Activated CD8-positive, alpha-beta memory T cell treated with anti-CD3 and anti-CD28 coated beads, Interleukin-2, amount 10 ng/mL, durations not matched to agents 7 days and 5 days (primary cell): ENCODE measurements at regions of chr5 and their contacts with region 1.

Region 1: GRCh38 chr5:181184857-181185251 is 20.1 kb downstream of the TRIM7 start:
- DNase-seq: no peak
- ATAC-seq: no peak
- H3K4me3 Mint-ChIP-seq: peak overlapping the region; percentile 81
- H3K27ac Mint-ChIP-seq: peak overlapping the region; percentile 98
- H3K4me1 Mint-ChIP-seq: peaks cover 44% of the 10 kb centered on the region
- H3K27me3 Mint-ChIP-seq: peaks cover 12% of the 10 kb centered on the region

Region 2: DNA sequence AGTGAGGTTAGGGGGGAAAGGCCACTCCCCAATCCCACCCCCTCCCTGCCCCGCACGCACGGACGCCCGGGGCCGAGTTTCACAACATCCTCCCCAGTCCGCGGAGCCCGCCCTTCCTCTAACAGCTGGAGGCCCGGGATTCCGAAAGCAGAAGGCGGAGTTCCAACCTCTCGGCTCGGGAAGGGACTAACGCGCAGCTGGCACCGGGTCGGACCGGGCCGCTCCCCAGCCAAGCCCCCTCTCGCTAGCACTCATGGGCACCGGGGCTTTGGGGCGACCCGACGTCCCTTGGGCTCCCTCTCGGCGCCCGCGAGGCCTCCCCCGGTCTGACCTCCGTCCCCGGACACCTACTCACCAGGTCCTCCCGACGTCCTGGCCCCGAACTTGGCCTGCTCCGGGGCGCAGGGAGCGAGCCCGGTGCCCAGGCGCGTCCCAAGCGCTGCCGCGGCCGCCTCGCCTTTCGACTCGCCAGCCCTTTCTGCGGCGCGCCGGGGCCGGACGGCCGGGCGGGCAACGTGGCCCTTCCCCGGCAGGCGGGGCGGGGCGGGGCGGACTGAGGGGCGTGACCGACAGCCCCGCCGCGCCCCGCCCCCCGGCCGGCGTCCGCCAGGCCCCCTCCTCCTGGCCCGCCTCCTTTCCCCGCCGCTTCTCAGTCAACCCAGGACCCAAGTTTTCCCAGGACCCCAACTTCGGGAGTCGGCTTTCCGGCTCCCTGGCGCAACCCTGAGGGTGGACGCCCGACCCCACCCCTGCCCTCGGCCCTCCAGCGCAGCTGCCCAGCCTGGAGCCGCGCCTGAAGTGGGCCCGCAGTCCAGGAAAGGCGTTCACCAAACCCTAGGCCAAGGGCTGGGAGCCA is 382.3 kb before region 1 on chr5 and contains the start of gene MGAT1:
- CTCF ChIA-PET with region 1: no interaction called
- DNase-seq: peak; percentile 82
- ATAC-seq: peak; percentile 60
- H3K4me3 Mint-ChIP-seq: peak within 1 kb of the TSS; percentile 78
- H3K27ac Mint-ChIP-seq: peak within 1 kb of the TSS; percentile 100
- H3K4me1 Mint-ChIP-seq: peaks cover 76% of the 10 kb centered on the region
- H3K27me3 Mint-ChIP-seq: no peaks in the 10 kb centered on the region
- total RNA-seq, gene MGAT1: 141 to 142 TPM

Region 3: GRCh38 chr5:181043285-181044092 is 141.4 kb before region 1 on chr5:
- CTCF ChIA-PET with region 1: no interaction called
- DNase-seq: no peak
- ATAC-seq: no peak
- H3K4me3 Mint-ChIP-seq: no peak overlapping the region
- H3K27ac Mint-ChIP-seq: no peak overlapping the region
- H3K4me1 Mint-ChIP-seq: no peaks in the 10 kb centered on the region
- H3K27me3 Mint-ChIP-seq: peaks cover 28% of the 10 kb centered on the region

Region 4: GRCh38 chr5:181159286-181159829 is 25.5 kb before region 1 on chr5:
- CTCF ChIA-PET with region 1: interaction called, 10 read pairs
- DNase-seq: peak; percentile 95
- ATAC-seq: peak; percentile 76
- H3K4me3 Mint-ChIP-seq: peak overlapping the region; percentile 51
- H3K27ac Mint-ChIP-seq: peak overlapping the region; percentile 97
- H3K4me1 Mint-ChIP-seq: peaks cover 66% of the 10 kb centered on the region
- H3K27me3 Mint-ChIP-seq: peaks cover 9% of the 10 kb centered on the region

Region 5: DNA sequence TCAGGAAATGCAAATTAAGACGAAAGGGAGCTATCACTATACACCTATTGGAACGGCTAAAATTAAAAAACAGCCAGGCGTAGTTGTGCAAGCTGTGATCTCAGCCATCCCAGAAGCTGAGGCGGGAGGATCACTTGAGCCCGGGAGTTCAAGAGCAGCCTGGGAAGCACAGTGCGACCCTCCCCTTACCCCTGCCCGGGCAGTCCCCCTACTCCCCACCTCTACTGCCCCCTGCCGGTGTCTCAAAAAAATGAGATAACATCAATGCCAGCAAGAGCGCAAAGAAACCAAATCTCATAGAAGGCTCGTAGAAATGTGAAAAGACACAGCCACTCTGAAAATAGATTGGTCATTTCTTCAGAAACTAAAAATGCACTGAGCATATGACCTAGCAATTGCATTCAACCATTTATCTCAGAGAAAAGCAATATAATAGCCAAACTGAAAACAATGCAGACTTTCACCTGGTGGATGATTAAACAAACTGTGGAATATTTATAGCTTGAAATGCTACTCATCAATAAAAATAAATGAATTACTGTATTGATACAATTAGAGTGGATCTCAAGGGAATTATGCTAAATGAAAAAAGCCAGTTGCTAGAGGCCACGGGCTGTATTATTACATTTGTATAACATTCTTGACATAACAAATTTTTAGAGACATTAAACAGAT is 16.9 kb before region 1 on chr5:
- CTCF ChIA-PET with region 1: interaction called, 36 read pairs
- DNase-seq: peak; percentile 61
- ATAC-seq: no peak
- H3K4me3 Mint-ChIP-seq: no peak overlapping the region
- H3K27ac Mint-ChIP-seq: no peak overlapping the region
- H3K4me1 Mint-ChIP-seq: peaks cover 79% of the 10 kb centered on the region
- H3K27me3 Mint-ChIP-seq: peaks cover 76% of the 10 kb centered on the region

Region 6: GRCh38 chr5:181223058-181223728 is 38.3 kb after region 1 on chr5 and contains the start of gene TRIM41:
- CTCF ChIA-PET with region 1: interaction called, 54 read pairs
- DNase-seq: peak; percentile 99
- ATAC-seq: peak; percentile 65
- H3K4me3 Mint-ChIP-seq: peak within 1 kb of the TSS; percentile 89
- H3K27ac Mint-ChIP-seq: peak within 1 kb of the TSS; percentile 99
- H3K4me1 Mint-ChIP-seq: peaks cover 59% of the 10 kb centered on the region
- H3K27me3 Mint-ChIP-seq: peaks cover 5% of the 10 kb centered on the region
- total RNA-seq, gene TRIM41: 40.7 to 44.9 TPM